ENCODE measurements at regions of chr15 and their contacts with region 1.

Region 1: DNA sequence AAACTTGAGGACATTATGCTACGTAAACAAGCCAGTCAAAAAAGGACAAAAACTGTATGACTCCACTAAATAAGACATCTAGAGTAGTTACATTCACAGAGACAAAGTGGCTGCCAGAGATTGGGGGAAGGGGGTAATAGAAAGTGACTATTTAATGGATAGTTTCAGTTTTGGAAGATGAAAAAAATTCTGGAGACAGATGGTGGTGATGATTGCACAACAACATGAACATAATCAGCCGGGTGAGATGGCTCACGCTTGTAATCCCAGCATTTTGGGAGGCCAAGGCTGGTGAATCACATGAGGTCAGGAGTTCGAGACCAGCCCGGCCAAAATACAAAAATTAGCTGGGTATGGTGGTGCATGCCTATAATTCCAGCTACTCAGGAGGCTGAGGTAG is 40.6 kb downstream of the DPP8 start:
- H3K4me3 ChIP-seq: no peak overlapping the region
- H3K27ac ChIP-seq: no peak overlapping the region
- H3K4me1 ChIP-seq: 0 out of 2 replicates have a peak, but pooled peaks cover 2% of the 10 kb centered on the region
- CTCF ChIP-seq: no peak

Region 2: DNA sequence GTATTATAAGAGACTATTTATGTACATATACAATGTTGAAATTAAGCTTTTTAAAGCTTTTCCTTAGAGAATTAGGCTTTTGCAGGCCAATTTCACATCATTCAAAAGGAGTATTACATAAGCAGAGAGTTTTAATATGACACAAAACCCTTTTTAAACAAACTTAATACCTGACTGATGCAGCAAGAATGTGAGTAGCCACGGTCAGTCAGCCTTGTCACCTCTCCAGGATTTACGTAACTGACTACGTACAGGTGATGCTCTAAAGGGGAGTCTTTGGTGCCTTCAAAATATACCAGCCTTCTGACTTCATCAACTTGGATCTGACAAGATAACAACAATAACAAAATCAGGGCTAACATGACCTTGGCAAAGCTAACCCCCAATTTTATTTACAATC is 10.0 kb before region 1 on chr15:
- CTCF ChIA-PET with region 1: interaction called, 11 read pairs
- POLR2A ChIA-PET with region 1: no interaction called
- H3K4me3 ChIP-seq: no peak overlapping the region
- H3K27ac ChIP-seq: no peak overlapping the region
- H3K4me1 ChIP-seq: no peaks in the 10 kb centered on the region
- CTCF ChIP-seq: no peak

Measured in HEK293 (cell line).